Esophagus squamous epithelium (tissue), 5 donors: ENCODE measurements at regions of chr11 and their contacts with region 1.

Region 1: DNA sequence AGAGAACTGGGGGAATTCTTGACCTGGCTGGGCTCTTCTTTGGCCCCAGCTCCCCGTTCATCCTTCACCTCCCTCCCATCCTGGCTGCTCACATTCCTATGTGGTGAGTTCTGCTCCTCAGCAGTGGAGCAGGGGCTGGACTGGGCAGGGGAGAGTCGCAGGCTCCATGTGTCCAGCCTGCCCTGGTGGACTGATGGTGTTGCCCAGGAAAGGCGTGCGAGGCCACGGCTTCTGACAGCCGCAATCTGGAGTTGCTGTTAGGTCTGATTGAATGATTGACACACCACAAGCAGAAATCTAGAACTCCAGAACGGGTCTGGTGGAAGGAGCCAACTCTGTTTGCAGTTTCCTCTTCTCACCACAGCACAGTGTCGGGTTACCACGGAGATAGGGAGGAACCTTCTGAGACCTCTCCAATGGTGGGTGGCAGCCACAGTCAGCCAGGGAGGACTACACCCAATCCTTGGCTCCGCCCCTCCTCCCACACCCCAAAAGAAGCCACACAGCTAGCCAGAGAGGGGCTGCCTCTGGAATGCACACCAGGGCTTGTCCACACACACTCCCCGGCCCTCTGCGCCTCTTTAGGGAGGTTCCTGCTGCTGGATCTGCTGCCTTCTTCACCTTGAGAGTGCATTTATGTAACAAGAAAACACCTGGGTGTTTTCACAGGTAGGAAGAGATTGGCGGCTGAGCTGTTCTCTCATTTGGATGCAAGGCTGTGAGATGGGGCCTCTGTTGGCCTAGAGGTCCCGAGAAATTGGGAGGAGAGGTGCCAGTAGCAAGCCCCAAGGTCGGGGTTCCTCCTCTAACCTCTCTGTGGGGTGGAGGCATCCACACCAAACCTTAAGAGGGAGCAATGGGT is 56.4 kb upstream of the CD44 start:
- DNase-seq: peak; percentile 33
- H3K4me3 ChIP-seq: peak overlapping the region in 2 of 4 donors; percentile 11 to 17
- H3K27ac ChIP-seq: peak overlapping the region; percentile 79 to 90 (median 82)
- H3K4me1 ChIP-seq: peaks cover 25 to 79% (median 37%) of the 10 kb centered on the region in 3 donors
- H3K27me3 ChIP-seq: no peaks in the 10 kb centered on the region
- CTCF ChIP-seq: no peak
- POLR2A ChIP-seq: peak in 1 of 4 donors; percentile 42

Region 2: DNA sequence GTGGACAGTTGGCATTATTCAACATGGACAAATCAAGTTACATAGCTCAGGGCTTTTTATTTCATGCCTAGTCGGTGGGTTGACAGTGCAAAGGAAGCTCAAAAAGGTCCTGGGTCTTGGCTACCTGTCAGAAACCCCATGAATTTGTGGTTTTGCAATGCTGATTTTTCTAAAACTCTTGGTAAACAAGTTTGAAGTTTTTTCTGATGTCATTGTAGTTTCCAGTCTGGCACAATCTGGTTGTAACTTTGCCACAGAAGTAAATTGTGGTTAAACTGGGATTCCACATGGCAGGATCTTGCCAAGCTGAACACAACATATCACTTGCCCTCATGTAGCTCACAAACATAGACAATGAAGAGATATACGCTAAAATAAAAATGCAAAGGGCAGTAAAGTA is 360.9 kb before region 1 on chr11:
- intact Hi-C with region 1: no loop called
- DNase-seq: no peak
- H3K4me3 ChIP-seq: no peak overlapping the region
- H3K27ac ChIP-seq: no peak overlapping the region
- H3K4me1 ChIP-seq: no peaks in the 10 kb centered on the region
- H3K27me3 ChIP-seq: no peaks in the 10 kb centered on the region
- CTCF ChIP-seq: no peak
- POLR2A ChIP-seq: no peak

Region 3: GRCh38 chr11:35144136-35144741 is 61.7 kb after region 1 on chr11:
- intact Hi-C with region 1: loop called (anchors 10 kb)
- DNase-seq: no peak
- H3K4me3 ChIP-seq: peak overlapping the region; percentile 2 to 86 (median 52)
- H3K27ac ChIP-seq: peak overlapping the region; percentile 90 to 99 (median 95)
- H3K4me1 ChIP-seq: peaks cover 51 to 99% (median 53%) of the 10 kb centered on the region in 3 donors
- H3K27me3 ChIP-seq: no peaks in the 10 kb centered on the region
- CTCF ChIP-seq: no peak
- POLR2A ChIP-seq: peak in 1 of 4 donors; percentile 36

Region 4: DNA sequence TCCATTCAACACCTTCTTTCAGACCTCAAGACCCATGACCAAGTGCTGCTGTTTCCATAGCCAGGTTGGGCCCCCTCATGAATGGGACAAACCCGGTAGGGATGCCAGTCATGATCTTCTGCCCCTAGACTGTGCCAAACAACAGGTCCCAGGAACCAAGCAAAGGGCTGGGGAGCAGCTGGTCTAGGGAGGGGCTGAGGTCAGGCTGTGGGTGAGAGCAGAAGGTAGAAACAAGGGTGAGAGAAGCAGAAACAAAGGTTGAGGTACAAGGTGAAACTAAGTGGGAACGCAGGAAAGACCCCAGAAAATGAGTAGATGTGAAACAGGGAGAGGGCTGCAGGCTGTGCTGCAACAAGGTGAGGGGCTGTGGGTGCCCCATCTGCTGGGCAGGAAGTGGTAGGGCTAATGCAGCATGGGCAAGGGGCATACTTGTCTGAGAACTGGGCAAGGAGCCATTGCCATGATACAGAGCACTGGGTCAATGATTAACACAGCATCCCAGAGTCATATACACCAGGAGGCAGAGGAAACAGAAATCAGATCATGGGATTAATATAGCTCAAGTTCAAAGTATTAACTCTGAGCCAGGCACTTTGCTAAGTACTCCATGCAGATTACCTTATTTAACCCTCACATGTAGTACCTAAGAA is 290.9 kb after region 1 on chr11:
- intact Hi-C with region 1: no loop called
- DNase-seq: no peak
- H3K4me3 ChIP-seq: no peak overlapping the region
- H3K27ac ChIP-seq: no peak overlapping the region
- H3K4me1 ChIP-seq: no peaks in the 10 kb centered on the region
- H3K27me3 ChIP-seq: no peaks in the 10 kb centered on the region
- CTCF ChIP-seq: no peak
- POLR2A ChIP-seq: no peak